CD4-positive, alpha-beta T cell (primary cell): ENCODE measurements at regions of chr1 and their contacts with region 1.

Region 1: GRCh38 chr1:149886396-149887195 is 12.8 kb upstream of the BOLA1 start:
- DNase-seq: peak; percentile 67 to 98 (median 82)
- ATAC-seq: peak; percentile 65
- H3K4me3 ChIP-seq: peak overlapping the region; percentile 87
- H3K4me3 Mint-ChIP-seq: no peak overlapping the region
- H3K27ac ChIP-seq: peak overlapping the region; percentile 91 to 96
- H3K27ac Mint-ChIP-seq: no peak overlapping the region
- H3K4me1 ChIP-seq: peaks cover 31% of the 10 kb centered on the region
- H3K4me1 Mint-ChIP-seq: peaks cover 10% of the 10 kb centered on the region
- H3K27me3 ChIP-seq: no peaks in the 10 kb centered on the region
- H3K27me3 Mint-ChIP-seq: no peaks in the 10 kb centered on the region
- CTCF ChIP-seq: no peak

Region 2: GRCh38 chr1:149899460-149900293 is 13.1 kb after region 1 on chr1 and contains the start of gene BOLA1:
- CTCF ChIA-PET with region 1: interaction called, 6 read pairs
- POLR2A ChIA-PET with region 1: interaction called, 124 read pairs
- intact Hi-C with region 1: loop called (anchors 1 kb)
- DNase-seq: peak; percentile 62 to 91 (median 75)
- ATAC-seq: peak; percentile 96
- H3K4me3 ChIP-seq: peak within 1 kb of the TSS; percentile 84
- H3K4me3 Mint-ChIP-seq: peak within 1 kb of the TSS; percentile 93
- H3K27ac ChIP-seq: peak within 1 kb of the TSS; percentile 73 to 86
- H3K27ac Mint-ChIP-seq: peak within 1 kb of the TSS; percentile 91
- H3K4me1 ChIP-seq: peaks cover 13% of the 10 kb centered on the region
- H3K4me1 Mint-ChIP-seq: peaks cover 21% of the 10 kb centered on the region
- H3K27me3 ChIP-seq: no peaks in the 10 kb centered on the region
- H3K27me3 Mint-ChIP-seq: no peaks in the 10 kb centered on the region
- CTCF ChIP-seq: no peak
- total RNA-seq, gene BOLA1: 4.6 to 6.4 TPM

Region 3: GRCh38 chr1:149962123-149962548 is 75.5 kb after region 1 on chr1:
- CTCF ChIA-PET with region 1: no interaction called
- POLR2A ChIA-PET with region 1: interaction called, 22 read pairs
- intact Hi-C with region 1: no loop called
- DNase-seq: peak in 13 of 14 experiments; percentile 11 to 80 (median 22)
- ATAC-seq: peak; percentile 89
- H3K4me3 ChIP-seq: no peak overlapping the region
- H3K4me3 Mint-ChIP-seq: no peak overlapping the region
- H3K27ac ChIP-seq: no peak overlapping the region
- H3K27ac Mint-ChIP-seq: no peak overlapping the region
- H3K4me1 ChIP-seq: peaks cover 3% of the 10 kb centered on the region
- H3K4me1 Mint-ChIP-seq: peaks cover 21% of the 10 kb centered on the region
- H3K27me3 ChIP-seq: no peaks in the 10 kb centered on the region
- H3K27me3 Mint-ChIP-seq: no peaks in the 10 kb centered on the region
- CTCF ChIP-seq: peak; percentile 93

Region 4: DNA sequence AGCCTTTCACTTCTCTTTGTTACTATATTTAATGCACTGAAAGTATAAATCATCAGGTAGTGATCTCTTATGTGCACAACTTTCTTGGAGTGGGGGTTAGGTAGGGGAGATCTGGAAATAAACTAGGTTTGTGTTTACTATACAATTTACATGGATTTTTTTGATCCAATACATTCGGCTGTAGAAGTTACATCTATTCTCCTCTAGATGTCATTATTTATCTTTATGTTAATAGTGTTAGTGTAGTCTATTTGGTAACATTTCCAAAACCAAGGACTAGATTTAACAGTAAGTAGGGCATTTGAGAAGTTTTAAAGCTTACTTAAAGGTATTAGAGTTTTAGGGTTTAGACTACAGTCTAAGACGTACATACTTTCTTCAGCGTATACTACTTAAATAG is 186.4 kb after region 1 on chr1:
- CTCF ChIA-PET with region 1: no interaction called
- POLR2A ChIA-PET with region 1: interaction called, 36 read pairs
- intact Hi-C with region 1: no loop called
- DNase-seq: peak in 3 of 14 experiments; percentile 37 to 60 (median 45)
- ATAC-seq: peak; percentile 80
- H3K4me3 ChIP-seq: no peak overlapping the region
- H3K4me3 Mint-ChIP-seq: peak overlapping the region; percentile 56
- H3K27ac ChIP-seq: no peak overlapping the region
- H3K27ac Mint-ChIP-seq: no peak overlapping the region
- H3K4me1 ChIP-seq: no peaks in the 10 kb centered on the region
- H3K4me1 Mint-ChIP-seq: peaks cover 38% of the 10 kb centered on the region
- H3K27me3 ChIP-seq: no peaks in the 10 kb centered on the region
- H3K27me3 Mint-ChIP-seq: no peaks in the 10 kb centered on the region
- CTCF ChIP-seq: peak; percentile 72

Region 5: GRCh38 chr1:150235852-150236613 is 349.4 kb after region 1 on chr1 and contains the start of gene ANP32E:
- CTCF ChIA-PET with region 1: no interaction called
- POLR2A ChIA-PET with region 1: interaction called, 44 read pairs
- intact Hi-C with region 1: no loop called
- DNase-seq: peak; percentile 89 to 99 (median 91)
- ATAC-seq: peak; percentile 89
- H3K4me3 ChIP-seq: peak within 1 kb of the TSS; percentile 85
- H3K4me3 Mint-ChIP-seq: no peak within 1 kb of the TSS
- H3K27ac ChIP-seq: peak within 1 kb of the TSS; percentile 96 to 99
- H3K27ac Mint-ChIP-seq: no peak within 1 kb of the TSS
- H3K4me1 ChIP-seq: peaks cover 25% of the 10 kb centered on the region
- H3K4me1 Mint-ChIP-seq: peaks cover 16% of the 10 kb centered on the region
- H3K27me3 ChIP-seq: no peaks in the 10 kb centered on the region
- H3K27me3 Mint-ChIP-seq: no peaks in the 10 kb centered on the region
- CTCF ChIP-seq: no peak
- total RNA-seq, gene ANP32E: 31.9 to 32.9 TPM

Region 6: DNA sequence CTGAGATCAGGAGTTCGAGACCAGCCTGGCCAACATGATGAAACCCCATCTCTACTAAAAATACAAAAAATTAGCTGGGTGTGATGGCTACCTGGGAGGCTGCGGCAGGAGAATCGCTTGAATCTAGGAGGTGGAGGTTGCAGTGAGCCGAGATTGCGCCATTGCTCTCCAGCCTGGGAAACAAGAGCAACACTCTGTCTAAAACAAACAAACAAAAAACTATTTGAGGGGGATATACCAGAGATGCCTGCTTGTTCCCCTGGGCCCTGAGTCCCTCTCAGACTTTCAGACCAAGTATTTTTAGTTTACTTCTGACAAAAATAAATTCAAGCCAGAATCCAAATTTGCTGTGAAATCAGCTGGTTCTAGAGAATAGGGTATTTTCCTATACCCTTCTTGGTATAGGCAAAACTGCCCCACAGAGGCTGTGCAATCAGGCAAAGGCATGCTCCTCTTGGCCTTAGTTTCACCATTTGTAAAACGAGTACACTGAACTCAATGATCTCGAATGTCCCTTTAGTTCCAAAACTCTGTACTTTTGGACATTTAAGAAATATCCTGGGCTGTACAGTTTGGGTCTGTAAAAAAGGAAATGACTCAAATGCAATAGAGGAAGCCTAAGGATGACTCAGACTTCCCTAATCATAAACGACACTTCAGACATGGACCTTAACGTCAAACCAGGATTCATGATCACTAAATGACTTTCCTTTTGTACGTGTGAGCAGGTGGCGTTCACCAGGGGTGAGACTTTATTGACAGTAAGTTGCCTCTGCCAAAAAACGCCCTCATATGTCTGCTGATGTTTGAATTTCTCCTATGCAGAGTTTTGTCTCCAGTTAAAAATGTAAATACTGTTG is 726.7 kb after region 1 on chr1:
- CTCF ChIA-PET with region 1: no interaction called
- POLR2A ChIA-PET with region 1: no interaction called
- intact Hi-C with region 1: no loop called
- DNase-seq: peak in 10 of 14 experiments; percentile 16 to 84 (median 35)
- ATAC-seq: peak; percentile 26
- H3K4me3 ChIP-seq: no peak overlapping the region
- H3K4me3 Mint-ChIP-seq: peak overlapping the region; percentile 30
- H3K27ac ChIP-seq: peak overlapping the region; percentile 75 to 76
- H3K27ac Mint-ChIP-seq: peak overlapping the region; percentile 80
- H3K4me1 ChIP-seq: peaks cover 60% of the 10 kb centered on the region
- H3K4me1 Mint-ChIP-seq: peaks cover 55% of the 10 kb centered on the region
- H3K27me3 ChIP-seq: no peaks in the 10 kb centered on the region
- H3K27me3 Mint-ChIP-seq: no peaks in the 10 kb centered on the region
- CTCF ChIP-seq: no peak

Region 7: GRCh38 chr1:150629115-150629928 is 742.7 kb after region 1 on chr1 and contains the start of gene ENSA:
- CTCF ChIA-PET with region 1: no interaction called
- POLR2A ChIA-PET with region 1: interaction called, 13 read pairs
- intact Hi-C with region 1: no loop called
- DNase-seq: peak; percentile 89 to 99 (median 92)
- ATAC-seq: peak; percentile 85
- H3K4me3 ChIP-seq: peak within 1 kb of the TSS; percentile 77
- H3K4me3 Mint-ChIP-seq: no peak within 1 kb of the TSS
- H3K27ac ChIP-seq: peak within 1 kb of the TSS; percentile 96 to 97
- H3K27ac Mint-ChIP-seq: no peak within 1 kb of the TSS
- H3K4me1 ChIP-seq: peaks cover 24% of the 10 kb centered on the region
- H3K4me1 Mint-ChIP-seq: peaks cover 21% of the 10 kb centered on the region
- H3K27me3 ChIP-seq: no peaks in the 10 kb centered on the region
- H3K27me3 Mint-ChIP-seq: no peaks in the 10 kb centered on the region
- CTCF ChIP-seq: no peak
- total RNA-seq, gene ENSA: 132 to 137 TPM